OCI-LY7 (cell line): ENCODE measurements at regions of chr13 and their contacts with region 1.

Region 1: DNA sequence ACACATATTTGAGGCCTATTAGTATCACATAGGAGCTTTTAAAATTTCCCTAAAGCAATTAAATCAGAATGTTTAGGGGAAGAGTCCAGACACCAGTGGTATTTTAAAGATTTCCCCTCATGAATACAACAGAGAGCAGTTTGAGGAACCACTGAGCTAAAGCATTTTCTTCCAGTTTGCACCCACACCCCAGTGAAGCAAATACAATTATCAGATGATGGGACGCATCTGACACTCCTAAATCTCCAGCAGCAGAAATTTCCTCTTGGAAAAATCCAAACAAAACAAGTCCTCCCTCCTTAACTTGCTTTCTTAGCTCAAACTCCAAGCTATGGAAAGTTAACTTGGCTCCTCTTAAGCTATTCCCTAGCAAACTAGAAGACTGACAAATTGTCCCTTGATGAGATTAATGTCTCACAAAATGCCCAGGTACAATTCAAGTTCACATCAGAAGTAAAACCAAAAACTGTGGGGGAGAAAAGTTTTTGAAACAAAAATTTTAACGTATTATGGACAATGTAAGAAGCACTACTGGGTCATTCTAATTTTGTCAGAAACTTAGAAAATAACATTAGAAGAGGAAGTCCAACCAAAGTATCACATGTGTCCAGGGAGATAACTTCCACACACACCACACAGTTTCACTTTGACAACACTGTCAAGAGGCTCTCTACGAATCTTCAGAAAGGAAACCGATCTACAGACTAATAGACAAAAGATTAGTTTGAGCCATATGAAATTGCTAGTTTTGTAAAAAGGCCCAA is 74.1 kb downstream of the ABCC4 start:
- DNase-seq: no peak
- H3K4me3 ChIP-seq: no peak overlapping the region
- H3K27ac ChIP-seq: no peak overlapping the region
- H3K4me1 ChIP-seq: peaks cover 23% of the 10 kb centered on the region
- CTCF ChIP-seq: no peak

Region 2: GRCh38 chr13:94917824-94918223 is 309.3 kb before region 1 on chr13:
- CTCF ChIA-PET with region 1: no interaction called
- POLR2A ChIA-PET with region 1: no interaction called
- intact Hi-C with region 1: no loop called
- DNase-seq: no peak
- H3K4me3 ChIP-seq: no peak overlapping the region
- H3K27ac ChIP-seq: no peak overlapping the region
- H3K4me1 ChIP-seq: no peaks in the 10 kb centered on the region
- CTCF ChIP-seq: no peak

Region 3: DNA sequence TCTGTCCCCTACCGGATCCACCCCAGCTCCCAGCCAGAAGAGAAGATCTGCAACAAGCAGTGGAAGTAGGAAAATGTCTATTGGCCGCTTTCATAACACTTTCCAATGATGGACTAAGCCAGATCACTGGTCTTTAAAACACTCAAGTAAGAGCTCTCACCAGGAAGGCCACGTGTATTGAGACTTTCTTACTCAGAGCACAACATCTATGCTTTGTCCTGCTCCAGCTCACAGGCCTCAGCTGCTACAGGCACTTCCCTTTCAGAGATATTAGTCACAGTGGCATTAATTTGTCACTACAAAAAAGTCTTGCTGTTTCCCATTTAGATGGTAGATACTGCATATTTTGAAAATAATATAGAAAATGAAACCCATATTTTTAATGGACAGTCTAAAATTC is 90.0 kb before region 1 on chr13:
- CTCF ChIA-PET with region 1: no interaction called
- POLR2A ChIA-PET with region 1: no interaction called
- intact Hi-C with region 1: no loop called
- DNase-seq: no peak
- H3K4me3 ChIP-seq: no peak overlapping the region
- H3K27ac ChIP-seq: no peak overlapping the region
- H3K4me1 ChIP-seq: no peaks in the 10 kb centered on the region
- CTCF ChIP-seq: no peak

Region 4: GRCh38 chr13:95207769-95208366 is 19.2 kb before region 1 on chr13:
- CTCF ChIA-PET with region 1: no interaction called
- POLR2A ChIA-PET with region 1: interaction called, 12 read pairs
- intact Hi-C with region 1: no loop called
- DNase-seq: peak; percentile 58
- H3K4me3 ChIP-seq: peak overlapping the region; percentile 53
- H3K27ac ChIP-seq: peak overlapping the region; percentile 71
- H3K4me1 ChIP-seq: peaks cover 31% of the 10 kb centered on the region
- CTCF ChIP-seq: no peak

Region 5: DNA sequence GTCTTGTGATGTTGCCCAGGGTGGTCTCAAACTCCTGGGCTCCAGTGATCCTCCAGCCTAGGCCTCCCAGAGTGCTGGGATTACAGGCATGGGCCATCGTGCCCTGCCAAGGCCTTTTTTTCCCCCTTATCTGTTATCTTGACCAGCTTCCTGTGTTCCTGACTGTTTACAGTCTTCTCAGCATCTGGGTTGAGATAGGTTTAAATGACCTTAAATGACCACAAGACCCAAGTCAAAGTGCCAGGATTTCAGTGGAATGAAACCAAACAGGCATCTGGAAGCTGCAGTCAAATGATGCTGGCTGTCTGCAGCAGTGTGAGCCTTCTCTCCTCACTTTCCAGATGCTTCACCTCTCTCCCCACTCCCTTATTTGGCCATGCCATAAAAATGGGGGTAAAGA is 211.2 kb after region 1 on chr13:
- CTCF ChIA-PET with region 1: no interaction called
- POLR2A ChIA-PET with region 1: no interaction called
- intact Hi-C with region 1: no loop called
- DNase-seq: no peak
- H3K4me3 ChIP-seq: no peak overlapping the region
- H3K27ac ChIP-seq: no peak overlapping the region
- H3K4me1 ChIP-seq: no peaks in the 10 kb centered on the region
- CTCF ChIP-seq: no peak